Kidney (tissue), 22 donors: ENCODE measurements at regions of chr3 and their contacts with region 1.

Region 1: DNA sequence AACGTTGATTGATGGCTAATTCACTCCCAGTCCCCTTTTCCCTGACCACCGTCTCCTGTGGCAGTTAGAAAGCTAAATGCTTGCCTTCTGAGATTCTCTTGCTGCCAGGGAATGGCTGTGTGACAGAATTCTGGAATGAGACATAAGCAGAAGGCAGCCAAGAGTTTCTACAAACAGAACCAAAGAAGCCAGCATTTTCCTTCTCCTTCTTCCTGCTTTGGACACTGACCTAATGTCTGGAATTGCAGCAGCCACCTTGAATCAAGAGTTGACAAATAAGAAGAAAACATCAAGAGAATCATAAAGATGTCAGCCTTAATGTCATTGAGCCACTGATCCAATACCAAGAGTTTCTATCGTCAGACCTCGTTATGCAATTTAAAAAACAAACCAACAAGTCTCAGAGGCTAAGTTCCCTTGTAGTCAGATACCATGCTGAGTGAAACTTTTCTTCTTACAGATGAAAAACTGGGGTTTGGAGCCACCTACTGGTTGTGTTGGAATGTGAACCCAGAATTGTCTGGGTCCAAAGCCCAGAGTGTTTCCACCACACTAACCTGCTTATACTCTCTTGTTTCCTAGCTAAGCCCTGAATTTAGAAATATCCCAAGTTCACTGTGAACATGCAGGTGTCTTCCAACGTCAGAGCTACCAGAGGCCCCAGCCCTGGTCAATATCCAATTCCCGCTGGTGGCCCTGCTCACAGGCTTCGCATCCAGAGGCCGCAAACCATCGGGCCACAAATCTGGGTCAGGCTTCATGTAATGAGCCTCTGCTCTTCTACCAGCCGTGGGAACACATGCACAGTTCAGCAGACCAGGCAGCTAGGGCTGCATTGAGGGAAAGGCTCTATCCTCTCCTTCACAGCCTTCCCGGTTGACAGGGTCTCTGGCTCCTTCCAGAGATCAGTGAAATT is 42.5 kb downstream of the MCF2L2 start:
- DNase-seq: peak in 4 of 5 donors; percentile 54 to 86 (median 70)
- H3K4me3 ChIP-seq: no peak overlapping the region
- H3K27ac ChIP-seq: no peak overlapping the region
- H3K4me1 ChIP-seq: no peaks in the 10 kb centered on the region
- H3K27me3 ChIP-seq: no peaks in the 10 kb centered on the region
- CTCF ChIP-seq: peak; percentile 76

Region 2: GRCh38 chr3:183180105-183180783 is 205.7 kb before region 1 on chr3:
- intact Hi-C with region 1: loop called (anchors 5 kb)
- DNase-seq: peak in 3 of 5 donors; percentile 28 to 51 (median 36)
- H3K4me3 ChIP-seq: no peak overlapping the region
- H3K27ac ChIP-seq: no peak overlapping the region
- H3K4me1 ChIP-seq: peaks cover 0 to 5% (median under 1%) of the 10 kb centered on the region in 3 donors
- H3K27me3 ChIP-seq: no peaks in the 10 kb centered on the region
- CTCF ChIP-seq: no peak